AG04450 (cell line): ENCODE measurements at regions of chr14 and their contacts with region 1.

Region 1: DNA sequence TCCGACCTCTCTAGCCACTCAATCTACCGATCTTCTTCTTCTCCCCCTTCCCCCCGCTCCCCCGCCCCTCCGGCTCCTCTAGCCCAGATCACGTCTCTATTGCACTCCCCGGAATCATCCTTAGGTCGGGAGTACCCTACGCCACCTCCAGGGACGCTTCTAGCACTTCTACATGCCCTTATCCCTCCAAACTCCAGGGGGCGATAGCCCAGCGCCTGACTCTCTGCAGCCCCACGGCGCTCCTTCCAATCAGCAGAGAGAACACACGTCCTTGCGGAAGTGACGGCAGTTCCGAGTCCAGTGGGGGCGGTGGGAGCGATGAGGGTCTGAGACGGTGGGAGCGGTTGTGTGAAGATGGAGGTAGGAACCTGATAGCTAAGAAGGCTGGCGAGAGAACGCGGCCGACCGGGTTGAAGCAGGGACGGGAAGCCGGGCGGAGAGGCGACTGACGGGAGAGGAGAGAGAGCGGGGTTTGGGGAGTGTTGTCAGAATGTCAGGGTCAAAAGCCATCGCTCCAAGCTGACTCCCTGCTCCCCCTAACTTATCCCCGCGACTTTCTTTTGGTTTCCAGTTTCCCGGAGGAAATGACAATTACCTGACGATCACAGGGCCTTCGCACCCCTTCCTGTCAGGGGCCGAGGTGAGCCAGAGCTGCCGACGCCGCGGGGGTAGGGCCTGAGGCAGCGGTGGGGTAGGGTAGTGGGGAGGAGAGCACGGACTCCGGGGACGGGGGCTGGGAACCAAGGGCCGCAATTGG is at the starts of genes RAB2B and TOX4:
- DNase-seq: peak; percentile 97
- H3K4me3 ChIP-seq: peak within 1 kb of the TSS; percentile 97
- H3K27ac ChIP-seq: peak within 1 kb of the TSS; percentile 71
- H3K27me3 ChIP-seq: no peaks in the 10 kb centered on the region
- CTCF ChIP-seq: peak; percentile 99
- polyA plus RNA-seq, gene RAB2B: 32.6 and 36.7 TPM in 2 replicates
- polyA plus RNA-seq, gene TOX4: 93.7 and 94.6 TPM in 2 replicates

Region 2: DNA sequence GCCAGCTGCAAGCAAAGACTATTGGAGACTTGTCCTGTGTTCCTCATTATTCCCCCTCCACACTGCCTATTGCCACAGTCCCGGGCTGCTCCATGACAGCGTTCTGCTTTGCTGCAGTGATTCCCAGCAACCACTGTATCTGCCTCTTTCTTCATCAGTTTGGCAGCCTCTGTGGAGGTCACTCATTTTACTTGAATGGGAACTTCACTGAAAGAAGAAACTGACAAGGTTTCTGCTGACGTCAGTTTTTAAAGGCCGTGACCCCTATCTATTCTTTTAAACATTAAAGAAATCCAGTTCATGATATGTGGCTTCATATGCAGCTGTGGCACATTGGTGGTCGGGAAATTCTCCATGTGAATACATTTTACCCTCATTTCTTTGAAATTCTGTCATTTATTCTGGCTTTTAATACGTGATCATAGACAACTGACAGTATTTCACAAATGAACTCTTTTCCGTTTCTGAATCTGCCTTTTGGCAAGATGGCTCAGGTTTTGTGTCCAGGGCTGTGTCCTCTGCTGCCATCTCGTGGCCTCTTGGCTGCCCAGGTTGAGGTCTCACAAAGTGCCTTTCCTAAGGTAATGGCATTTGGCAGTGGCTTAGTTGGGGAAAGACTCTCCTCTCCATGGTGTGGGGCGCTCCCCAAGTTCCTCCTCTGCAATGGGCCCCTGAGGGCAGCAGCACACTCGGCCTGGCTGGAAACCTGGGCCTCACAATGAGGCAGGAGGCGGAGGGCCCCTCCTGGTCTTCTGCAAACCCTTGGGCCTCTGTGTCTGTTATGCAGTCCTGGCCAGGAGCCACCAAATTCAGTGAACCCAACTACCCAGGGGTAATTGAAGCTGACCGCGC is 370.4 kb before region 1 on chr14:
- CTCF ChIA-PET with region 1: no interaction called
- POLR2A ChIA-PET with region 1: no interaction called
- DNase-seq: no peak
- H3K4me3 ChIP-seq: no peak overlapping the region
- H3K27ac ChIP-seq: no peak overlapping the region
- H3K27me3 ChIP-seq: no peaks in the 10 kb centered on the region
- CTCF ChIP-seq: peak; percentile 98

Region 3: GRCh38 chr14:21168055-21168454 is 309.0 kb before region 1 on chr14:
- CTCF ChIA-PET with region 1: no interaction called
- POLR2A ChIA-PET with region 1: no interaction called
- DNase-seq: no peak
- H3K4me3 ChIP-seq: no peak overlapping the region
- H3K27ac ChIP-seq: no peak overlapping the region
- H3K27me3 ChIP-seq: peaks cover 2% of the 10 kb centered on the region
- CTCF ChIP-seq: no peak

Region 4: GRCh38 chr14:21308479-21309237 is 168.4 kb before region 1 on chr14:
- CTCF ChIA-PET with region 1: no interaction called
- POLR2A ChIA-PET with region 1: interaction called, 10 read pairs
- DNase-seq: no peak
- H3K4me3 ChIP-seq: peak overlapping the region; percentile 10; the same call in 1 of the 2 replicates
- H3K27ac ChIP-seq: no peak overlapping the region
- H3K27me3 ChIP-seq: peaks cover 31% of the 10 kb centered on the region
- CTCF ChIP-seq: no peak